Activated CD4-positive, alpha-beta memory T cell treated with anti-CD3 and anti-CD28 coated beads for 36 hours (primary cell): ENCODE measurements at regions of chr9 and their contacts with region 1.

Region 1: GRCh38 chr9:75909776-75910175 is 19.3 kb downstream of the PCSK5 start:
- DNase-seq: peak; percentile 12
- H3K4me3 Mint-ChIP-seq: no peak overlapping the region
- H3K27ac Mint-ChIP-seq: no peak overlapping the region
- H3K4me1 Mint-ChIP-seq: peaks cover 16% of the 10 kb centered on the region
- H3K27me3 Mint-ChIP-seq: no peaks in the 10 kb centered on the region

Region 2: GRCh38 chr9:75855509-75855908 is 54.3 kb before region 1 on chr9:
- CTCF ChIA-PET with region 1: no interaction called
- POLR2A ChIA-PET with region 1: no interaction called
- intact Hi-C with region 1: no loop called
- DNase-seq: no peak
- H3K4me3 Mint-ChIP-seq: no peak overlapping the region
- H3K27ac Mint-ChIP-seq: no peak overlapping the region
- H3K4me1 Mint-ChIP-seq: no peaks in the 10 kb centered on the region
- H3K27me3 Mint-ChIP-seq: peaks cover 4% of the 10 kb centered on the region

Region 3: GRCh38 chr9:75890472-75891276 is 19.1 kb before region 1 on chr9 and contains the start of gene PCSK5:
- CTCF ChIA-PET with region 1: no interaction called
- POLR2A ChIA-PET with region 1: interaction called, 4 read pairs
- intact Hi-C with region 1: loop called (anchors 1 kb)
- DNase-seq: peak; percentile 90
- H3K4me3 Mint-ChIP-seq: peak within 1 kb of the TSS; percentile 91
- H3K27ac Mint-ChIP-seq: peak within 1 kb of the TSS; percentile 61
- H3K4me1 Mint-ChIP-seq: peaks cover 28% of the 10 kb centered on the region
- H3K27me3 Mint-ChIP-seq: peaks cover 13% of the 10 kb centered on the region
- total RNA-seq, gene PCSK5: 2.0 to 2.1 TPM

Region 4: DNA sequence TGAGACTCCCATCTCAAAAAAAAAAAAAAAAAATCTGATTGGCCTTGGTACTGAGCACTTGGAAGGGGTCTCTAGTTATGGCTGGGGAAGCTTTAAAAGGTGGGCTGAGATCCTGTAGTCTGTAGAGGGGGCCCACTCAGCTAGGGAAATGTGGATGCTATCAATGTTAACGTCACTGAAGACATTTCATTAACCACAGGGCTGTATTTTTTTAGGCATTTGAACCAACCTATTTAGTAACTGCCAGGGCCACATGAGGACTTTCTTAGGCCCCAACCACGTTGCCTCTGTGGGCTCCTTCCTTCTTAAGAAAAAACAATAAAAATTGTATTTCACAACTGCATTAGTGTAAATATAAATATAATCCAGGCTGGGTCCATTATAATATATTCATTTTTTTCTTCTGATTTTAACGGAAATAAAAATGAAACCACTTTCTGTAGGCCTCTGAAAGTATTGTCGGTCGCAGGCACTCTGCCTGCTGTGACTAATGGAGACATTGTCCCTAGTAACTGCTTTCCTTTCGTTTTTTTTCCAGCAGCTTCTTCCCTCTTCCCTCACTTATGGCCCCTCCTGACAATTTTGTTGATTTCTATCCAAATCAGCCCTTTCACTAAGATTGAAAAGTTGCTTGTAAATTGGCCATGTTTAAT is 620.8 kb after region 1 on chr9:
- CTCF ChIA-PET with region 1: no interaction called
- POLR2A ChIA-PET with region 1: no interaction called
- intact Hi-C with region 1: no loop called
- DNase-seq: no peak
- H3K4me3 Mint-ChIP-seq: no peak overlapping the region
- H3K27ac Mint-ChIP-seq: no peak overlapping the region
- H3K4me1 Mint-ChIP-seq: peaks cover 15% of the 10 kb centered on the region
- H3K27me3 Mint-ChIP-seq: no peaks in the 10 kb centered on the region